ENCODE measurements at regions of chr1 and their contacts with region 1.

Region 1: DNA sequence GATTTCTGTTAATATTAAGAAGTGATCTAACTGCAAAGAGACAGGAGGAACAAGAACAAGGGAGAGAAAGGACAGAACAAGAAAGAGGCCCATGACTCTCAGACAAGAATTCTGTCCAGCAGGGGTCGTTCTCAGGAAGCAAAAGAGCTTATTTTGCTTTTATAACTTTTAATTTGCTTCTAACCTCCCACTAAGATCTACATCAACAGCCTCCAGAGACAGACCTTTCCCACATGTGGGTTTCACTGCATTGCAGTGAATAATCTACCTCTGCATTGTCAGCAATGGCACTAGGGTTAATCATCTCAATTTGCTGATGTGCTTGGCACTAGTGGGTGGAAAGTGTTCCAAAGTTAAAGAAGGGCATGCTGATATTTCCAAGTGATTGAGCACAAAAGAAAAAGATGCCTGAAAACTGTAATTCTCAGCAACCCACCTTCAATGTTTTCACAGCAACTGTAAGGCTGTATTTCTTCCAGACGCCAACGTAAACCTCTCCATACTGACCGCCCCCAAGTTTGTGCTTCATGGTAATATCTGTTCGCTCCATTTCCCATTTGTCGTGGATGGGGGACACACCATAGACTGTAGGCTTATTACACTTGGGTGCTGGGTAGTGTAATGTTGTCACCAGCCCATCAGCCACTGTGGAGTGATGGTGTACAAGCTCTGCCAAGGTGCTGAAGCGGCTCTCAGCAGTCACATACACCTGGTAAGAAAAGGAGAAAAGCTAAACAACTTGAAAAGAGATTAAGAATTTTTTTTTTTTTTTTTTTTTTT is 39.5 kb downstream of the TOR3A start:
- DNase-seq: peak; percentile 42
- H3K4me3 ChIP-seq: no peak overlapping the region
- H3K27ac ChIP-seq: peak overlapping the region in 1 of 2 experiments; percentile 54; a peak in 2 of 4 replicates
- H3K4me1 ChIP-seq: peaks cover 4 to 9% of the 10 kb centered on the region in 2 experiments; a peak in 3 of 4 replicates
- H3K27me3 ChIP-seq: no peaks in the 10 kb centered on the region
- CTCF ChIP-seq: peak; percentile 81
- EP300 ChIP-seq: no peak
- RAD21 ChIP-seq: peak; percentile 78

Region 2: GRCh38 chr1:179087665-179088225 is 33.6 kb before region 1 on chr1:
- CTCF ChIA-PET with region 1: interaction called, 12 read pairs
- POLR2A ChIA-PET with region 1: no interaction called
- DNase-seq: no peak
- H3K4me3 ChIP-seq: no peak overlapping the region
- H3K27ac ChIP-seq: no peak overlapping the region
- H3K4me1 ChIP-seq: peaks cover 0 to 8% of the 10 kb centered on the region in 2 experiments; a peak in 1 of 4 replicates
- H3K27me3 ChIP-seq: no peaks in the 10 kb centered on the region
- CTCF ChIP-seq: no peak
- EP300 ChIP-seq: no peak
- RAD21 ChIP-seq: no peak

Region 3: GRCh38 chr1:179105350-179105749 is 16.0 kb before region 1 on chr1:
- CTCF ChIA-PET with region 1: interaction called, 26 read pairs
- POLR2A ChIA-PET with region 1: no interaction called
- DNase-seq: no peak
- H3K4me3 ChIP-seq: no peak overlapping the region
- H3K27ac ChIP-seq: no peak overlapping the region
- H3K4me1 ChIP-seq: peaks cover 0 to 23% of the 10 kb centered on the region in 2 experiments; a peak in 2 of 4 replicates
- H3K27me3 ChIP-seq: no peaks in the 10 kb centered on the region
- CTCF ChIP-seq: peak; percentile 51
- EP300 ChIP-seq: no peak
- RAD21 ChIP-seq: peak; percentile 17

Region 4: GRCh38 chr1:179278920-179279319 is 157.6 kb after region 1 on chr1:
- CTCF ChIA-PET with region 1: no interaction called
- POLR2A ChIA-PET with region 1: no interaction called
- DNase-seq: no peak
- H3K4me3 ChIP-seq: no peak overlapping the region
- H3K27ac ChIP-seq: no peak overlapping the region
- H3K4me1 ChIP-seq: no peaks in the 10 kb centered on the region
- H3K27me3 ChIP-seq: no peaks in the 10 kb centered on the region
- CTCF ChIP-seq: no peak
- EP300 ChIP-seq: no peak
- RAD21 ChIP-seq: no peak